PC-9 (cell line): ENCODE measurements at regions of chr16 and their contacts with region 1.

Region 1: DNA sequence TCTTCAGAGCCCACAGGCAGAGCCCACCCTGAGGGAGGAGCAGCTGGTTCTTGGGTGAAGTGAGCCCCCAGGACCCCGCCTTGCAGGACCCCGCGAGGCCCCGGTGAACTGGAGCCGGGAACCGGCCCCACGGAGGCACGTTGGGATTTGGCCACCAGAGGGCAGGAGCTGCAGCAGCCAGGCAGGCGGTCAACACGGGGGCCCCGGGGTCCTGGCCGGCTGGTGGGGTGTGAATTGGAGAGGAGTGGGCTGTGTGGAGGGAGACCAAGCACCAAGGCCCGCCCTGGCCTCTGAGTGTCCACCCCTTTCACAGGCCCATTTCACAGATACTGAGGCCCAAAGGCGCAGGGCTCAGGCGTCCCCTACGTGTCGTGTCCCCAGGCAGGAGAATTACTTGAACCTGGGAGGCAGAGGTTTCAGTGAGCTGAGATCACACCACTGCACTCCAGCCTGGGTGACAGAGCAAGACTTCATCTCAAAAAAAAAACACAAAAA is 2.2 kb downstream of the DPEP1 start:
- DNase-seq: peak in 1 of 2 experiments; percentile 53
- H3K4me3 ChIP-seq: no peak overlapping the region
- H3K27ac ChIP-seq: no peak overlapping the region
- H3K4me1 ChIP-seq: no peaks in the 10 kb centered on the region
- H3K27me3 ChIP-seq: peaks cover 9% of the 10 kb centered on the region; the same call in 1 of the 2 replicates
- CTCF ChIP-seq: peak; percentile 91

Region 2: DNA sequence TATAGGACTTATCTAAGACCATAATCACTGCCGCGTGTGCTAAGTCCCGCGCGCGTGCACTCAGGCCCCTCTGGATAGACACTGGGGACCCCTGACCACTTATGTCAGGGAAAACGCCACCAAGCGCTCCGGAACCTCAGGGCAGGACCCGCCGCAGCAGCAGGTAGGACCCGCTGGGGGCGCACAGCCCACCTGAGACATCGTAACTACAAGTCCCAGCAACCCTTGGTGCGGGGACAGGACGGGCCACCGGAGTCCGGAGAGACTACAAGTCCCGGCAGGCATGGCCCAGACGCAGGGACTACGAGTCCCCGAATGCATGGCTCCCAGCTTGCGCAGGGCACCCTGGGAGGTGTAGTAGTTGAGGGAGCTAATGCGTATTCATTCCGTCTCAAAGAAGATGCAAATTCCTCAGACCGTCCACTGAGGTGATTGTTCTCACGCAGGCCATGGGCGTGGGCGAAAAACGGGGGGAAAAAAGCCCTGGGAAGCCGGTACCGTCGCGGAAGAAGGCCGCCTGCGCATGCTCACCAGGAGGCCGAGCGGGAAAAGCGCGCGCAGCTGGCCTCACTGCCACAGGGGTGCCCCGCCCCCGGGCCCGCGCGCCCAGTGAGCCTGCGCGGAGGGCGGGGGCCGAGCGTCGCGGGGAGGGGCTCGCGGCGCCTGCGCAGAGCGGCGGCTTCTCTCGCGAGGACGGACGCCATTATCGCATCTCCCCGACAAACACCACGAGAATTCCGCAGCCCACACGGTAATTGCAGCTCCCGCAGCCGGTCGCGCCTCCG is 1664.7 kb before region 1 on chr16 and contains the start of gene BANP:
- CTCF ChIA-PET with region 1: no interaction called
- POLR2A ChIA-PET with region 1: no interaction called
- intact Hi-C with region 1: no loop called
- DNase-seq: peak; percentile 98 to 99
- H3K4me3 ChIP-seq: peak within 1 kb of the TSS; percentile 96
- H3K27ac ChIP-seq: peak within 1 kb of the TSS; percentile 77
- H3K4me1 ChIP-seq: peaks cover 30% of the 10 kb centered on the region
- H3K27me3 ChIP-seq: no peaks in the 10 kb centered on the region
- CTCF ChIP-seq: peak; percentile 69
- total RNA-seq, gene BANP: 60.9 and 73.2 TPM in 2 replicates

Region 3: GRCh38 chr16:89593841-89594240 is 21.8 kb before region 1 on chr16:
- CTCF ChIA-PET with region 1: interaction called, 11 read pairs
- POLR2A ChIA-PET with region 1: no interaction called
- intact Hi-C with region 1: no loop called
- DNase-seq: no peak
- H3K4me3 ChIP-seq: no peak overlapping the region
- H3K27ac ChIP-seq: no peak overlapping the region
- H3K4me1 ChIP-seq: no peaks in the 10 kb centered on the region
- H3K27me3 ChIP-seq: no peaks in the 10 kb centered on the region
- CTCF ChIP-seq: no peak

Region 4: GRCh38 chr16:89629827-89630610 is 14.4 kb after region 1 on chr16:
- CTCF ChIA-PET with region 1: interaction called, 10 read pairs
- POLR2A ChIA-PET with region 1: no interaction called
- intact Hi-C with region 1: no loop called
- DNase-seq: no peak
- H3K4me3 ChIP-seq: no peak overlapping the region
- H3K27ac ChIP-seq: no peak overlapping the region
- H3K4me1 ChIP-seq: peaks cover 12% of the 10 kb centered on the region; the same call in 1 of the 2 replicates
- H3K27me3 ChIP-seq: peaks cover 11% of the 10 kb centered on the region; the same call in 1 of the 2 replicates
- CTCF ChIP-seq: no peak

Region 5: DNA sequence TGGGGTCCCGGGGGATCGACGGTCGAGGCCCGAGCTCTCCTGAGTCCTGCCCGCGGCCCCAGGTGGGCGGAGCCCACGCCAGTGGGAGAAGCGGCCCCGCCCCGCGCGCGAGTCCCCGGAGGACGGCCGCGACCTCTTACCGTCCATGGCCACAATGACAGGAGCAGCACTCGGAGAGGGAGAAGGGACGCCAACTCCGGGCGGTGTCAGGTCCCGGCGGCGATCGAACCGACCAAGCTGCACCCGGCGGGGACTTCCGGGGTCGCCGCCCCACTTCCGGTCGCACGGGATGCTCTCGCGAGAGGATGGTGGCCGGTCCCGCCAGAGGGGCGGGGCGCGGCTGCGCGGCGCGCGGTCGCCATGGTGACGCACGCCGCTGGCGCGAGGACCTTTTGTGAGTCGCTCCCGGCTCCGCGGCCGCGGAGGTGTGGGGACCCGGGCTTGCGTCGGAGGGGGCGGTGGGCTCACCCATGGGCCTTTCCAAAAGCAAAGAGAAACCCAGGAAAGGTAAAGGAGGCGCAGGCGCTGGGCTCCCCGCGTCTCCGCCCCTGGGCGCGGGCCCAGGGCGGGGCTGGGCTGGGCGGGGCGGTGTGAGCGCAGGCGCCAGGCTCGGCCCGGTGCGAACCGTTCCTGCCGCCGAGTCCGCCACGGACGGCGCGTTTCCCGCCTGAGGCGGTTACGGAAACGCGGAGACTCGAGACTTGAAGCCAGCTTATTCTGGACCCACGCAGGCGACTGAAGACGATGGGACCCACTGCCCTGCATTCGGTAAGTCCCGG is 42.0 kb after region 1 on chr16 and contains the starts of genes CHMP1A and SPATA33:
- CTCF ChIA-PET with region 1: interaction called, 12 read pairs
- POLR2A ChIA-PET with region 1: no interaction called
- intact Hi-C with region 1: no loop called
- DNase-seq: peak; percentile 66 to 95
- H3K4me3 ChIP-seq: peak within 1 kb of the TSS; percentile 93
- H3K27ac ChIP-seq: no peak within 1 kb of the TSS
- H3K4me1 ChIP-seq: peaks cover 18% of the 10 kb centered on the region
- H3K27me3 ChIP-seq: no peaks in the 10 kb centered on the region
- CTCF ChIP-seq: no peak
- total RNA-seq, gene CHMP1A: 151 and 237 TPM in 2 replicates
- total RNA-seq, gene SPATA33: 21.0 and 25.6 TPM in 2 replicates